HEK293 (cell line): ENCODE measurements at regions of chr17 and their contacts with region 1.

Region 1: GRCh38 chr17:50865984-50866774 is at the start of gene TOB1:
- H3K4me3 ChIP-seq: peak within 1 kb of the TSS; percentile 86
- H3K27ac ChIP-seq: peak within 1 kb of the TSS; percentile 99
- H3K4me1 ChIP-seq: peaks cover 33% of the 10 kb centered on the region
- CTCF ChIP-seq: no peak

Region 2: GRCh38 chr17:50853015-50853615 is 13.1 kb before region 1 on chr17:
- CTCF ChIA-PET with region 1: interaction called, 89 read pairs
- POLR2A ChIA-PET with region 1: interaction called, 52 read pairs
- H3K4me3 ChIP-seq: no peak overlapping the region
- H3K27ac ChIP-seq: no peak overlapping the region
- H3K4me1 ChIP-seq: no peaks in the 10 kb centered on the region
- CTCF ChIP-seq: no peak

Region 3: DNA sequence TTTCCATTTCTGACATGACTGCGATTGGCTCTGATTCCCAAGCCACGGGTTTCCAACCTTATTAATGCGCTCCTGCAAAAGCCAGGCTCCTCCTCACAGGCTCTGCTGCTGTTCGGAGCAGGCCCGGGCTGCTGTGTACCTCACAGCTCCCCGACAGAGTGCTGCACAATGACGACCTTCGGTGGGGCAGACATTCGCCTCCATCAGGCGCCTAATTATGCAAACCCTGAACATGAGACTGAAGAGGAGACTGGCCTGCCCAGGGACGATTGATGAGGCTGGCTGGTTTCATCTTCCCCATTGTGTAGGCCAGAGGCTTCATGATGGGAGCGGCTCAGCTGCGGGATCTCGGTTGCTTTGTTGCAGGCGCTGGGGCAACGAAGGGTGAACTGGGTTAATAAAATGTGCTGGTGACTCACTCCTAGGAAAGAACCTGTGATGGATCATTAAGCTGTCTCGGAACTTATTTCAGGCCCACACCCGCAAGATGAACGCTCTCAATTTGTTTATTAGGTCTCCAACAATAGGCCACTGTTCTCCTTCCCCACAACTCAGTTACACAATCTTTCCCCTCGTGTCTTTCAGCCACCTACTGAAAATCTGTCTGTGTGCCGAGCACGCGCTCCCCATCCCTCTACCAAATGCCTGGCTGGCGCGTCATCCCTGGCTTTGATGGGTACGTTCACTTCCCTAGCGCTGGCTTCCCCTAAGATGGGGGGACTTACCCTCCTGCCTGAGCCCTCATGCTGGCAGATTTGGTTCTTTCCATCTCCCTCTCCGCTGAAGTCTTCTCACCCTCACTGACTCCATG is 27.2 kb after region 1 on chr17:
- CTCF ChIA-PET with region 1: interaction called, 4 read pairs
- POLR2A ChIA-PET with region 1: interaction called, 28 read pairs
- H3K4me3 ChIP-seq: no peak overlapping the region
- H3K27ac ChIP-seq: no peak overlapping the region
- H3K4me1 ChIP-seq: no peaks in the 10 kb centered on the region
- CTCF ChIP-seq: no peak

Region 4: GRCh38 chr17:50919321-50920085 is 53.3 kb after region 1 on chr17:
- CTCF ChIA-PET with region 1: interaction called, 3 read pairs
- POLR2A ChIA-PET with region 1: interaction called, 31 read pairs
- H3K4me3 ChIP-seq: no peak overlapping the region
- H3K27ac ChIP-seq: no peak overlapping the region
- H3K4me1 ChIP-seq: peaks cover 2% of the 10 kb centered on the region
- CTCF ChIP-seq: no peak

Region 5: GRCh38 chr17:50949989-50950881 is 84.1 kb after region 1 on chr17:
- CTCF ChIA-PET with region 1: interaction called, 78 read pairs
- POLR2A ChIA-PET with region 1: interaction called, 106 read pairs
- H3K4me3 ChIP-seq: no peak overlapping the region
- H3K27ac ChIP-seq: peak overlapping the region; percentile 44; the same call in 1 of the 2 replicates
- H3K4me1 ChIP-seq: no peaks in the 10 kb centered on the region; the same call in 1 of the 2 replicates
- CTCF ChIP-seq: peak; percentile 94

Region 6: GRCh38 chr17:51006601-51007000 is 140.4 kb after region 1 on chr17:
- CTCF ChIA-PET with region 1: no interaction called
- POLR2A ChIA-PET with region 1: no interaction called
- H3K4me3 ChIP-seq: no peak overlapping the region
- H3K27ac ChIP-seq: no peak overlapping the region
- H3K4me1 ChIP-seq: no peaks in the 10 kb centered on the region
- CTCF ChIP-seq: no peak

Region 7: GRCh38 chr17:51120739-51121617 is 254.8 kb after region 1 on chr17 and contains the start of gene SPAG9:
- CTCF ChIA-PET with region 1: interaction called, 3 read pairs
- POLR2A ChIA-PET with region 1: interaction called, 23 read pairs
- H3K4me3 ChIP-seq: peak within 1 kb of the TSS; percentile 96
- H3K27ac ChIP-seq: peak within 1 kb of the TSS; percentile 95
- H3K4me1 ChIP-seq: peaks cover 14% of the 10 kb centered on the region
- CTCF ChIP-seq: no peak